ENCODE measurements at regions of chr9 and their contacts with region 1.

Region 1: GRCh38 chr9:121059998-121060636 is 10.0 kb upstream of the C5 start:
- DNase-seq: peak; percentile 24 to 69 (median 38)
- ATAC-seq: peak; percentile 74
- H3K4me3 ChIP-seq: no peak overlapping the region
- H3K27ac ChIP-seq: no peak overlapping the region
- H3K4me1 ChIP-seq: no peaks in the 10 kb centered on the region; a peak in 1 of 5 replicates
- H3K27me3 ChIP-seq: no peaks in the 10 kb centered on the region
- CTCF ChIP-seq: peak; percentile 74 to 79 (median 74)
- EP300 ChIP-seq: no peak
- POLR2A ChIP-seq: no peak
- RAD21 ChIP-seq: peak; percentile 62 to 71

Region 2: DNA sequence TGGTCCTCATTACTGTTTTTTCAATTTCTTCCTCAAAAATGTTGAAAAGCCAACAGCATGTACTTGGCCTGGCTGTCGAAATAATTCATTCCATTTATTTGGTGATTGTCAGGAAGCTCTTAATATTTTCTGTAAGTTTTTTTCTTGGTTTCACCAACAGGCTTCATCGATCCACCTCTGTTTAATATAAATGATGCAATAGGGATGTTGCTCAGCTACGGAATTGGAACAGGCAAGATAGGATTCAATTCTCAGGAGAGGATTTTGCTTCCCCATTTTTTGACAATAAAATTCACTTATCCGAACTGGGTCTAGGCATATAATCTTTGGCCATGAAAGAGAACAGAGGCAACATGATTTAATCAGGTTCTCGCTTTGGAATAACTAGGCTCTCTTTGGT is 40.8 kb before region 1 on chr9:
- CTCF ChIA-PET with region 1: no interaction called
- POLR2A ChIA-PET with region 1: no interaction called
- in situ Hi-C with region 1: no loop called
- intact Hi-C with region 1: loop called (anchors 5 kb)
- DNase-seq: no peak
- ATAC-seq: no peak
- H3K4me3 ChIP-seq: no peak overlapping the region
- H3K27ac ChIP-seq: no peak overlapping the region
- H3K4me1 ChIP-seq: no peaks in the 10 kb centered on the region
- H3K27me3 ChIP-seq: no peaks in the 10 kb centered on the region; a peak in 1 of 5 replicates
- CTCF ChIP-seq: no peak
- EP300 ChIP-seq: no peak
- POLR2A ChIP-seq: no peak
- RAD21 ChIP-seq: no peak

Measured in K562 (cell line).